IMR-90 (cell line): ENCODE measurements at regions of chr10 and their contacts with region 1.

Region 1: GRCh38 chr10:22436884-22437619 is 91.8 kb downstream of the SPAG6 start:
- DNase-seq: peak; percentile 89
- ATAC-seq: peak; percentile 83
- H3K4me3 ChIP-seq: peak overlapping the region; percentile 56
- H3K27ac ChIP-seq: peak overlapping the region; percentile 90
- H3K4me1 ChIP-seq: peaks cover 8% of the 10 kb centered on the region; the same call in 1 of the 2 replicates
- H3K27me3 ChIP-seq: peaks cover 7% of the 10 kb centered on the region
- CTCF ChIP-seq: no peak
- POLR2A ChIP-seq: peak; percentile 82; the same call in 1 of the 2 replicates
- RAD21 ChIP-seq: no peak

Region 2: DNA sequence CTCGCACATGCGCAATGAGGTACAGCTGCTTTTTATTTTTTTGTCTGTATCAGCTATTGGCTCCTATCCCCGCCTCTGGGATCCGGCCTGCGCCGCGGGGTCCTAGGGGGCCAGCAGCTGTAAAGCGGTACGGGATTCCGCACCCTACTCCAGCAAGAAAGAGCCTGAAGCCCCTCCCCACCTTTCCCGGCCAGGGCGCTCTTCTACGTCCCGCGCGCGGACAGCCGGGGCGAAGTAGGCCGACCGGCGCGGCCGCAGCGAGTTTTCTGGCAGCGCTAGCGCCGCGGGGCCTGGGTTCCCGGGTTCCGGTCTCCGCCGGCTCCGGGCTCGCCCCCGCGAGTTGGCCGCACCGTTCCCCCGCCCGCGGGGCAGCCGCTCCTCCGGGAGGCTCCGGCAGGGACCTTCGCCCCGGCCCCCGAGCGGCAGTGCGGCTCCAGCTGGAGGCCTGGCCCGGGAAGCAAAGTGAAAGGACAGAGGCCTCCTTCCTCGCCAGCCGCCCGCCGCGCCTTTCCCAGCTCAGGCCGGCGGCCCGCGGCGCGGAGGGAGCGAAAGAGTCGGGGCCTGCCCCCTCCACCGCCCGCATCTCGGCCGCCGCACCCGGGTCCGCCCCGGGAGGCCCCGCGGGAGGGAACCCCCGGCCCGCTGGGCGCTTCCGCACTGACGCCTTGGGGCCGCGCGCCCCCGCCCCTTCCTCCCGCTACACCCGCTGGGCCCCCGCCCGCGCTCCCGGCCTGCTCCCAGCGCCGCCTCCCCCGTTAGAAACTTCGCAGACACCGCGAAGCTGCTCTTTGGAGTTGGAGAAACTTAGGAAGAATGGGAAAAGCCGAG is 96.5 kb before region 1 on chr10:
- CTCF ChIA-PET with region 1: no interaction called
- POLR2A ChIA-PET with region 1: no interaction called
- dilution Hi-C with region 1: no loop called
- in situ Hi-C with region 1: no loop called
- intact Hi-C with region 1: loop called (anchors 2 kb)
- DNase-seq: peak; percentile 82
- ATAC-seq: peak; percentile 81
- H3K4me3 ChIP-seq: peak overlapping the region; percentile 74
- H3K27ac ChIP-seq: peak overlapping the region; percentile 89
- H3K4me1 ChIP-seq: no peaks in the 10 kb centered on the region
- H3K27me3 ChIP-seq: peaks cover 67% of the 10 kb centered on the region
- CTCF ChIP-seq: no peak
- POLR2A ChIP-seq: peak; percentile 50
- RAD21 ChIP-seq: no peak

Region 3: GRCh38 chr10:22550732-22551131 is 113.7 kb after region 1 on chr10:
- CTCF ChIA-PET with region 1: no interaction called
- POLR2A ChIA-PET with region 1: no interaction called
- dilution Hi-C with region 1: no loop called
- in situ Hi-C with region 1: no loop called
- intact Hi-C with region 1: loop called (anchors 5 kb)
- DNase-seq: peak; percentile 4
- ATAC-seq: no peak
- H3K4me3 ChIP-seq: no peak overlapping the region
- H3K27ac ChIP-seq: no peak overlapping the region
- H3K4me1 ChIP-seq: peaks cover 3% of the 10 kb centered on the region; the same call in 1 of the 2 replicates
- H3K27me3 ChIP-seq: no peaks in the 10 kb centered on the region
- CTCF ChIP-seq: peak; percentile 46
- POLR2A ChIP-seq: no peak
- RAD21 ChIP-seq: peak; percentile 24; the same call in 1 of the 2 replicates